ENCODE measurements at regions of chr6 and their contacts with region 1.

Region 1: DNA sequence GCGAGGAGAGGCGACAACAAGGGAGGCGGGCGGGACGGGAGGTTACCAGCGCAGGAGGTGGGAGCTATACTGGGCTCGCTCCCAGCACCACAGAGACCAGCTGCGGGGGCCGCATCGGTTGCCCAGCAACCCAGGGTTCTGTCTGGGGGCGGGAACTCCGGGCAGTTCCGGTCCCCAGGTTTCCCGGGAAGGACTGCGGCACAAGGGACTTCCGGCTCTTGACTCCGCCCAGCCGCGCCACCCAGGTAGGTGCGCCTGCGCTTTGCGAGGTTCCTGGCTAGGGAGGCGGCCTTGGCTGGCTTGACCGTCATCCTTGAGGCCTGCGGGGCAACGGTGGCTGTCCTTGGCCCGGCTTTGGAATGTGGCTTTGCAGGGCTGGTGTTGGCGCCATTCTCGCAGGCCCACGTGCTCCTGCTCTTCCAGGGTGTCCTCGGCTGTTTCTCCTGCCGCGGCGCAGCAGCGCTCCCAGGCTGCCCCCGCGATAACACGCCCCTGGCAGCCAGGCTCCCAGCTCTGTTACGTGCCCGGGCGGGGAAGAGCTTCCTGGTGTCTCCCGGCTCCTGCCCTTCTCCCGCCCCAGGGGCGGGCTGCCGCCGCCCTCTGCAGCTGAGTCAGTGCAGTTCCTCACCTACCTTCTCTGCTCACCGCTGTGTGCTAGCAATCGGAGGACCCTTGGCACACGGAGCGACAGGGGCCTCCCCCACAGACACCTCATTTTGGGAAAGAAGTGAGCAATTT is at the start of gene RSPH3:
- DNase-seq: peak; percentile 90
- ATAC-seq: peak; percentile 93
- H3K4me3 ChIP-seq: peak within 1 kb of the TSS; percentile 57
- H3K27ac ChIP-seq: peak within 1 kb of the TSS; percentile 64
- H3K4me1 ChIP-seq: peaks cover 4% of the 10 kb centered on the region; the same call in 1 of the 2 replicates
- H3K27me3 ChIP-seq: no peaks in the 10 kb centered on the region
- CTCF ChIP-seq: 0 out of 2 replicates have a peak, but pooled peaks have one; percentile 20
- POLR2A ChIP-seq: no peak
- RAD21 ChIP-seq: peak; percentile 19
- total RNA-seq, gene RSPH3: 3.0 and 3.3 TPM in 2 replicates

Region 2: DNA sequence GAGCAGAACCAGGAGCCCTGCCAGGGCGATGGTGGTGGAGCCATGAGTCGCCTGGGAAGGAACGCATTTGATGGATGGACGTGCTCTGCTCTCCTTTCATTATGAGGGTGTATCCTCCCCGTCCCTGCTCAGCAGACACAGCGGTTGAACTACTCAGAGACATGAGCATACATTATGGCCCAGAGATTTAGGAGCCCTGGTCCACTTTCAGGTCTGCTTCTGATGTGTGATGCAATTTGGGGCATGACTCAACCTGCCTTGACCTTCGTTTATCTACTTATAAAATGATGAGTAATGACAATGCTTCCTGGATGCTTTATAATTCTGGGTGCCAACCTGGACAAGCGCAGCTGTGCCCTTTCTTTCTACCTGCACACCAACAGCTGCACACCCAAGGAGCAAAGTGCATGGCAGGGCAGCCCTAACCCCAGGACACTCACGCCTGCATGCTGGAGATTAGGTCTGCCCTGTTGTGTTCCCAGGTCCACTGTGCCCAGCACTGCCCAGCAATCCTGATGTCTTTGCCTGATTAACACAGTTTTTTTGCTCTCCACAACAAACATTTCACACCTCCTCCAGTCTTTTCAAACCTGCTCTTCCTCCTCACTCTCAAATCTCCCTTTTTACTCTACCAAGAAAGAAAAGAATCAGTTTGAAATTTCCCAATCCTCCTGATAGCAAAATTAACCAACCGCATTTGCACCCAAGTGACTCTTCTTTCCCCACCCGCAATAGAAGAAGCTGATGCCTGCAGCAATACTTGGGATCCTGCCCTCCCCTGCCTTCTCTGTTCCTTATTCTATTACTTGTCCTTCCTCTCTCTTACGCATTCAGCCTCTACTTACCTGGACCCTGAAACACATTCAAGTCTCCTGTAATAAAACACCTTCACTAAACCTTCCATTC is 261.9 kb before region 1 on chr6:
- CTCF ChIA-PET with region 1: no interaction called
- POLR2A ChIA-PET with region 1: no interaction called
- dilution Hi-C with region 1: no loop called
- in situ Hi-C with region 1: no loop called
- intact Hi-C with region 1: no loop called
- DNase-seq: peak; percentile 65
- ATAC-seq: peak; percentile 65
- H3K4me3 ChIP-seq: no peak overlapping the region
- H3K27ac ChIP-seq: no peak overlapping the region
- H3K4me1 ChIP-seq: no peaks in the 10 kb centered on the region
- H3K27me3 ChIP-seq: no peaks in the 10 kb centered on the region
- CTCF ChIP-seq: no peak
- POLR2A ChIP-seq: no peak
- RAD21 ChIP-seq: no peak

Region 3: DNA sequence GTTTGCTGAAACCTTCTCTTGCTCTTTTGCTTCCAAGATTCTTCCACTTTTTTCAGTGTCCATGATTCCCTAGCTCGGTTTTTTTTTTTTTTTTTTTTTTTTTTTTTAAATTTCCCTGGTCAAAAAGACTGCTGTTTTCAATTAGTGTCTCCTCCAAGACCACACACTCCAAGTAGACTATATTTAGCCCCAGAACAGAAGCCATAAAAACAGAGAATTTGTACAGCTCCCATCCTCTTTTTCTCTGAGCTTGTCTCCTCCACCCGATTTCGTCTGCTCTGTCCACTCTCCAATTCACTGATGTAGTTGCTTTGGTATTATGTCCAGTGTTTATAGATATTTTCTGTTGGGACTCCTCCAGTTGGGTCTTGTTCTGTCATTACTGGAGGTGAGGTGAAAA is 37.5 kb before region 1 on chr6:
- CTCF ChIA-PET with region 1: no interaction called
- POLR2A ChIA-PET with region 1: interaction called, 11 read pairs
- dilution Hi-C with region 1: no loop called
- in situ Hi-C with region 1: no loop called
- intact Hi-C with region 1: no loop called
- DNase-seq: no peak
- ATAC-seq: no peak
- H3K4me3 ChIP-seq: no peak overlapping the region
- H3K27ac ChIP-seq: no peak overlapping the region
- H3K4me1 ChIP-seq: no peaks in the 10 kb centered on the region
- H3K27me3 ChIP-seq: no peaks in the 10 kb centered on the region
- CTCF ChIP-seq: no peak
- POLR2A ChIP-seq: no peak
- RAD21 ChIP-seq: no peak

Region 4: GRCh38 chr6:159061805-159062563 is 62.1 kb after region 1 on chr6:
- CTCF ChIA-PET with region 1: no interaction called
- POLR2A ChIA-PET with region 1: no interaction called
- dilution Hi-C with region 1: no loop called
- in situ Hi-C with region 1: no loop called
- intact Hi-C with region 1: no loop called
- DNase-seq: no peak
- ATAC-seq: no peak
- H3K4me3 ChIP-seq: no peak overlapping the region
- H3K27ac ChIP-seq: no peak overlapping the region
- H3K4me1 ChIP-seq: no peaks in the 10 kb centered on the region
- H3K27me3 ChIP-seq: peaks cover 39% of the 10 kb centered on the region
- CTCF ChIP-seq: no peak
- POLR2A ChIP-seq: no peak
- RAD21 ChIP-seq: no peak

Measured in IMR-90 (cell line).